ENCODE measurements at regions of chr10 and their contacts with region 1.

Region 1: GRCh38 chr10:97072851-97073665 is 112.7 kb downstream of the SLIT1 start:
- DNase-seq: peak; percentile 82
- H3K4me3 ChIP-seq: no peak overlapping the region
- H3K27ac ChIP-seq: no peak overlapping the region
- H3K4me1 ChIP-seq: no peaks in the 10 kb centered on the region
- H3K27me3 ChIP-seq: peaks cover 39% of the 10 kb centered on the region
- CTCF ChIP-seq: peak; percentile 78 to 92 (median 85)
- EP300 ChIP-seq: no peak
- POLR2A ChIP-seq: no peak

Region 2: DNA sequence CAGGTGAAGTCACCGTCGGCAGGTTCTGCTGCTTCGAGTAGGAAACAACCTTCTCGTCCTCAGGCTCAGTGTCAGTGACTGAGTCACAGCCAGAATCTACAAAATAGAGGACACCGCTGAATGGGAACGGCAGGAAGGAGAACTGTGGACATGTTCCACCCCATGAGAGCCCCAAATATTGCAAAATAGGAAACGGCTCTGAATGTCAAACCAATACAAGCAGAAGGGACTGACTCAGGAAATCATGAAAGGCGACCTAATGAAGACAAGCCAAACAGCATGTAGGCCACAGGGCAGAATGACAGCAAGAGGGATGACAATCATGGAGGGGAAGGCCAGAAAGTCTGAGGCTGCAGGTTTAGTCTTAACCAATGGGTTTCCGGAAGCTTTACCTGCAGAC is 416.2 kb before region 1 on chr10:
- in situ Hi-C with region 1: no loop called
- intact Hi-C with region 1: no loop called
- DNase-seq: no peak
- H3K4me3 ChIP-seq: no peak overlapping the region
- H3K27ac ChIP-seq: peak overlapping the region in 2 of 4 donors; percentile 19 to 30
- H3K4me1 ChIP-seq: no peaks in the 10 kb centered on the region
- H3K27me3 ChIP-seq: no peaks in the 10 kb centered on the region
- CTCF ChIP-seq: no peak
- EP300 ChIP-seq: no peak
- POLR2A ChIP-seq: no peak

Region 3: DNA sequence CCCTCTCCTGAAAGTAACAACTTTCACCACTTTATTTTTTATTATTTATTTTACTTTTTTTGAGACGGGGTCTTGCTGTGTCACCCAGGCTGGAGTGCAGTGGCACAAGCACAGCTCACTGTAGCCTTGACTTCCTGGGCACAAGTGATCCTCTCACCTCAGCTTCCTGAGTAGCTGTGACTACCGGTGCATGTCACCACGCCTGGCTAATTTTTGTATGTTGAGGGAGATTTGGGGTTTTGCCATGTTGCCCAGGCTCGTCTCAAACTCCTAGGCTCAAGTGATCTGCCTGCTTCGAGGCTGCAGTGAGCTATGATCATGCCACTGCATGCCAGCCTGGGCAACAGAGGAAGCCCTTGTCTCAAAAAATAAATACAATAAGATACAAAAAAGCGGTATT is 127.6 kb after region 1 on chr10:
- in situ Hi-C with region 1: loop called (anchors 5 to 25 kb)
- intact Hi-C with region 1: no loop called
- DNase-seq: no peak
- H3K4me3 ChIP-seq: no peak overlapping the region
- H3K27ac ChIP-seq: no peak overlapping the region
- H3K4me1 ChIP-seq: peaks cover 0 to 10% (median 8%) of the 10 kb centered on the region in 4 donors
- H3K27me3 ChIP-seq: peaks cover 33% of the 10 kb centered on the region
- CTCF ChIP-seq: no peak
- EP300 ChIP-seq: no peak
- POLR2A ChIP-seq: no peak

Region 4: DNA sequence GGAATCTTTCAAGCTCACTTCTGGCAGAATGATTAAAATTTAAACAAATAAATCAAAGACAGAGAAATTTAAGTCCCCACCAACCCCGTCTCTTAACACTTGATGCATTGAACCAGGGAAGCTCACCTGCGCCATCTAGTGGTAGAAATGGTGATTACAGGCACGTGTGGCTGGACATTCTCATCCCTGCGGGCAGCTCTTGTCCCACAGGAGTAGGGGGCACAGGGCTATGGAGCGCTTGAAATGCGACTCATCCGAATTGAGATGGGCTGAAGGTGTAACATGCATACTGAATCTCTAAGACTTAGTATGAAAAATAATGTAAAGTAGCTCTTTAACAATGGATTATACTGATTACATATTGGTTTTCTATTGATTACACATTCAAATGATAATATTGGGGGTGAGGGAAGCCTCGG is 137.5 kb after region 1 on chr10:
- in situ Hi-C with region 1: loop called (anchors 5 to 25 kb)
- intact Hi-C with region 1: loop called (anchors 5 kb)
- DNase-seq: peak; percentile 66
- H3K4me3 ChIP-seq: no peak overlapping the region
- H3K27ac ChIP-seq: no peak overlapping the region
- H3K4me1 ChIP-seq: no peaks in the 10 kb centered on the region
- H3K27me3 ChIP-seq: no peaks in the 10 kb centered on the region
- CTCF ChIP-seq: peak; percentile 88 to 100 (median 97)
- EP300 ChIP-seq: no peak
- POLR2A ChIP-seq: no peak

Region 5: GRCh38 chr10:97355571-97355975 is 282.5 kb after region 1 on chr10:
- in situ Hi-C with region 1: loop called in 1 of 4 experiments (anchors 25 kb)
- intact Hi-C with region 1: no loop called
- DNase-seq: peak; percentile 36
- H3K4me3 ChIP-seq: no peak overlapping the region
- H3K27ac ChIP-seq: no peak overlapping the region
- H3K4me1 ChIP-seq: peaks cover 0 to 1% (median 0%) of the 10 kb centered on the region in 4 donors
- H3K27me3 ChIP-seq: no peaks in the 10 kb centered on the region
- CTCF ChIP-seq: peak; percentile 39 to 54 (median 47)
- EP300 ChIP-seq: no peak
- POLR2A ChIP-seq: no peak